CD4-positive, alpha-beta memory T cell (primary cell): ENCODE measurements at regions of chr10 and their contacts with region 1.

Region 1: DNA sequence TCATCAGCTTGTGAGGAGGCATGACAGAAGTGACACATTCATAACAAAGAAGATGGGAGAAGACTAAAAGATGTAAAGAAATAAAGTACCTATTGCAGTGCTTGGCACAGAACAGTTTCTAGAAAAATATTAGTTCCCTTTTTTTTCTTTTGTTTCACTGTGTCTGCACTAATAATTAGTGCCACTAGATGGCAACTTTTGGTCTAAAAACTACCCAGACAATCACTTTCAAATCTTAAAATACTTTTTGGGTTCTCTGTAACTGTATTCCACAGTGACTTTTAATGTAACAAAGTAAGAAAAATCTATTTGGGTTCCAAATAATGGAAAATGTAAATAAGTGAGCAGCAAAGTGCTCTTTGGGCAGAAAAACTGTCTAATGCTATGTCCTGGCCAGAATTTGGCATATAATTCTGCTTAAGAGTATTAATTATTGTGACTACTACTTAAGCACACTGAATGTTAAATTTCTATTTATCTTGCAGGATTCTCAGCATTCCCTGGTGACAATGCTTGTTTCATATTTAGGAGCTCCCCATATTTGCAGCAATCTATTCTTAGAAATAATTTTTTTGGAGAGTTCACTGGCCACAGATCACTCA is 134.8 kb upstream of the KIF5B start:
- DNase-seq: peak in 4 of 5 donors; percentile 31 to 44 (median 40)
- H3K4me3 ChIP-seq: no peak overlapping the region
- H3K4me3 Mint-ChIP-seq: no peak overlapping the region
- H3K27ac ChIP-seq: no peak overlapping the region
- H3K27ac Mint-ChIP-seq: peak overlapping the region in 4 of 7 donors; percentile 5 to 59 (median 50)
- H3K4me1 ChIP-seq: no peaks in the 10 kb centered on the region
- H3K4me1 Mint-ChIP-seq: peaks cover 0 to 6% (median 3%) of the 10 kb centered on the region in 4 donors
- H3K27me3 ChIP-seq: no peaks in the 10 kb centered on the region
- H3K27me3 Mint-ChIP-seq: no peaks in the 10 kb centered on the region

Region 2: DNA sequence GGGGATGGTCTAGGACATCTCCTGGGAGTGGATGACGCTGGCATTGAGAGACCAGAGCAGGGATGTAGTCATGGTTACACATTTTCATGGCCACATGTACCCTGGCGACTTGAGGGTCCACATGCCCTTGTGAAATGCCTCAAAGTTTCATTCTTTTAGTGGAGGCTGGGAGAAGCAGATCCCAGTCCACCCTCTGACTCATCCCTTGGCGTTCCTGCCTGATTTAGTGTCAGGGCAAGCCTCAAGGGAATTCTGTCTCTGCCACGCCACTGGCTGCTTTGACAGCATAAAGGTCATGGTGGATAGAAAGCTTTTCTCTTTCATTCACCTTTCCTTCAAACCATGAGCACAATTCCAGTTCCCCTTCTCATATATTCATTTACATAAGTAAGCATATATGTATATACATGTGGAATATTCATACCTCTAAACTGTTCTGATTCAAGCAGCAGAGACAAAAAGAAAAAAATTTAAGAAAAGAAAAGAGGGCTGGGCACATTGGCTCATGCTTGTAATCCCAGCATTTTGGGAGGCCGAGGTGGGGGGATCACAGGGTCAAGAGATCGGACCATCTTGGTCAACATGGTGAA is 113.0 kb before region 1 on chr10:
- CTCF ChIA-PET with region 1: no interaction called
- POLR2A ChIA-PET with region 1: no interaction called
- intact Hi-C with region 1: no loop called
- DNase-seq: no peak
- H3K4me3 ChIP-seq: no peak overlapping the region
- H3K4me3 Mint-ChIP-seq: no peak overlapping the region
- H3K27ac ChIP-seq: no peak overlapping the region
- H3K27ac Mint-ChIP-seq: no peak overlapping the region
- H3K4me1 ChIP-seq: no peaks in the 10 kb centered on the region
- H3K4me1 Mint-ChIP-seq: no peaks in the 10 kb centered on the region
- H3K27me3 ChIP-seq: no peaks in the 10 kb centered on the region
- H3K27me3 Mint-ChIP-seq: peaks cover 0 to 5% of the 10 kb centered on the region in 2 donors

Region 3: DNA sequence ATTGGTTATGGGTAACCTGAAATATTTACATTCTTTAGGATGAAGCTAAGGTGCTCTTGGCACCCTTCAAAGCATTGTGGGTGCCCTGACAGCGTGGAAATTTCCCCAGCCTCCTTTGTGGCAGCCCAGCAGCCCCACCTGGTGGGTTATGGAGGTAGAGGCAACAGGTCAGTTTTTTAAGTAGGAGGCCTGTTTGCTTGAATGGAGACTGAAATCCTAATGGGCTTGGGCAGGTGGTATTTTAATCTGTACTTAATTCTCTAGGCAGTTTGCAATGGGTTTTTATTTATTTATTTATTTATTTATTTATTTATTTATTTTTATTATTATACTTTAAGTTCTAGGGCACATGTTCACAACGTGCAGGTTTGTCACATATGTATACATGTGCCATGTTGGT is 16.6 kb after region 1 on chr10:
- CTCF ChIA-PET with region 1: interaction called, 13 read pairs
- POLR2A ChIA-PET with region 1: no interaction called
- intact Hi-C with region 1: loop called (anchors 1 kb)
- DNase-seq: peak; percentile 39 to 52 (median 45)
- H3K4me3 ChIP-seq: no peak overlapping the region
- H3K4me3 Mint-ChIP-seq: no peak overlapping the region
- H3K27ac ChIP-seq: no peak overlapping the region
- H3K27ac Mint-ChIP-seq: no peak overlapping the region
- H3K4me1 ChIP-seq: no peaks in the 10 kb centered on the region
- H3K4me1 Mint-ChIP-seq: peaks cover 0 to 2% (median 0%) of the 10 kb centered on the region in 4 donors
- H3K27me3 ChIP-seq: no peaks in the 10 kb centered on the region
- H3K27me3 Mint-ChIP-seq: peaks cover 1% of the 10 kb centered on the region in 2 donors